WTC11 (cell line): ENCODE measurements at regions of chr16 and their contacts with region 1.

Region 1: GRCh38 chr16:68264128-68265077 is at the start of gene SLC7A6:
- DNase-seq: peak; percentile 76
- ATAC-seq: peak; percentile 60
- H3K4me3 Mint-ChIP-seq: peak within 1 kb of the TSS; percentile 93
- H3K27ac Mint-ChIP-seq: peak within 1 kb of the TSS; percentile 77
- H3K4me1 Mint-ChIP-seq: peaks cover 34% of the 10 kb centered on the region
- H3K27me3 Mint-ChIP-seq: peaks cover 16% of the 10 kb centered on the region
- CTCF ChIP-seq: peak; percentile 69
- total RNA-seq, gene SLC7A6: 27.4 TPM in 3 replicates

Region 2: GRCh38 chr16:68237243-68238028 is 27.0 kb before region 1 on chr16:
- CTCF ChIA-PET with region 1: interaction called, 35 read pairs
- POLR2A ChIA-PET with region 1: interaction called, 8 read pairs
- DNase-seq: peak; percentile 99
- ATAC-seq: peak; percentile 79
- H3K4me3 Mint-ChIP-seq: peak overlapping the region; percentile 94
- H3K27ac Mint-ChIP-seq: peak overlapping the region; percentile 98
- H3K4me1 Mint-ChIP-seq: peaks cover 24% of the 10 kb centered on the region
- H3K27me3 Mint-ChIP-seq: peaks cover 14% of the 10 kb centered on the region
- CTCF ChIP-seq: no peak

Region 3: GRCh38 chr16:68251832-68252231 is 12.6 kb before region 1 on chr16:
- CTCF ChIA-PET with region 1: interaction called, 20 read pairs
- POLR2A ChIA-PET with region 1: no interaction called
- DNase-seq: no peak
- ATAC-seq: no peak
- H3K4me3 Mint-ChIP-seq: no peak overlapping the region
- H3K27ac Mint-ChIP-seq: no peak overlapping the region
- H3K4me1 Mint-ChIP-seq: no peaks in the 10 kb centered on the region
- H3K27me3 Mint-ChIP-seq: no peaks in the 10 kb centered on the region
- CTCF ChIP-seq: no peak

Region 4: GRCh38 chr16:68289621-68290329 is 25.4 kb after region 1 on chr16:
- CTCF ChIA-PET with region 1: interaction called, 24 read pairs
- POLR2A ChIA-PET with region 1: no interaction called
- DNase-seq: no peak
- ATAC-seq: no peak
- H3K4me3 Mint-ChIP-seq: no peak overlapping the region
- H3K27ac Mint-ChIP-seq: peak overlapping the region; percentile 37
- H3K4me1 Mint-ChIP-seq: peaks cover 8% of the 10 kb centered on the region
- H3K27me3 Mint-ChIP-seq: no peaks in the 10 kb centered on the region
- CTCF ChIP-seq: no peak

Region 5: GRCh38 chr16:68328151-68328859 is 63.9 kb after region 1 on chr16:
- CTCF ChIA-PET with region 1: interaction called, 74 read pairs
- POLR2A ChIA-PET with region 1: no interaction called
- DNase-seq: peak; percentile 84
- ATAC-seq: peak; percentile 100
- H3K4me3 Mint-ChIP-seq: no peak overlapping the region
- H3K27ac Mint-ChIP-seq: peak overlapping the region; percentile 80
- H3K4me1 Mint-ChIP-seq: no peaks in the 10 kb centered on the region; the same call in 1 of the 2 replicates
- H3K27me3 Mint-ChIP-seq: no peaks in the 10 kb centered on the region
- CTCF ChIP-seq: peak; percentile 76

Region 6: GRCh38 chr16:68367030-68367429 is 102.6 kb after region 1 on chr16:
- CTCF ChIA-PET with region 1: interaction called, 19 read pairs
- POLR2A ChIA-PET with region 1: no interaction called
- DNase-seq: peak; percentile 75
- ATAC-seq: peak; percentile 69
- H3K4me3 Mint-ChIP-seq: no peak overlapping the region
- H3K27ac Mint-ChIP-seq: 0 out of 2 replicates have a peak overlapping the region, but pooled peaks have one; percentile 76
- H3K4me1 Mint-ChIP-seq: peaks cover 30% of the 10 kb centered on the region
- H3K27me3 Mint-ChIP-seq: peaks cover 2% of the 10 kb centered on the region; the same call in 1 of the 2 replicates
- CTCF ChIP-seq: peak; percentile 32; the same call in 1 of the 2 replicates